Endothelial cell of umbilical vein (primary cell): ENCODE measurements at regions of chr5 and their contacts with region 1.

Region 1: DNA sequence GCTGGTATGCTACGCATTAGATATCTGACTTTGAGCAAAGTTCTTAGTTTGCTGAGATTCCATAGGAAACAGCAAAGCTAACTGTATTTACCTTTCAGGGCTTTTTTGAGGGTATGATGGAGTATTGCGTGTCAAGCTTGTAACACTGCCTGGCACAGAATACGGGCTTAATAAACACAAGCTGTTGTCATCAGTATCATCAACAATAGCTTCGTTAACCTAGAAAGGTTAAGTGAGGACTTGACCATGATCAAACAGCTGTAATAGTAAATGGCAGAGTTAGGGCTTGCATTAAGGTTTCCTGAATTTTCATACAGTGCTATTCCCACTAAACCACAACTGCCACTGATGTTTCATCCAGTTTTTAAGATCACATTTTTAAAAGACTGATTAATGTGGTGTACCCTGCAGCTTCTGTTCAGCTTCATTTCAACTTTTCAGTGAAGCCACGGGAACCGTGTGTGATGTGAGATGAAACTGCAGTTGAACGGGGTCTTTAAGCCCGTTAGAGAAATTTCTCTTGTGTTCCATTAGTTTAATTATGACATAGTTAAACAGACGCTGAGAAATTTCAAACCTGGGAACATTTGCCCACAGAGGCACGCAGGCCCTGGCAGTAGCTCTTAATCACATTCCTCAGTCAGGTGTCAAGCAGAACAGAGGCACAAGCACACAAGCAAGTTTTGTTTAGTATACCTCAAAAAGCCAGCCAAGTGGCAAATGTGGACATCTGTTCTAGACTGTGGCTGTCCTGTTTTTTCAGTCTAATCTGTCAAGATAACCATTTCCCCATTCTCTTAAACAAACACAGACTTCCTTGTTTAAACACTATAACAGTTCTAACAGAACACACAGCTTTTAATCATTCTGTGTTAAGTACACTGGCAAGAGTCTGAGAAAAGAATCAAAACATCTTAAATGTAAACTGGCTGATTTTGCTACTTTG is 147.1 kb downstream of the ZNF608 start:
- DNase-seq: peak; percentile 98
- H3K4me3 ChIP-seq: peak overlapping the region in 1 of 3 experiments; percentile 41
- H3K27ac ChIP-seq: peak overlapping the region; percentile 99
- H3K4me1 ChIP-seq: peaks cover 63% of the 10 kb centered on the region
- H3K27me3 ChIP-seq: no peaks in the 10 kb centered on the region
- CTCF ChIP-seq: no peak
- POLR2A ChIP-seq: peak; percentile 78

Region 2: GRCh38 chr5:123671042-123671441 is 928.3 kb before region 1 on chr5:
- CTCF ChIA-PET with region 1: interaction called, 3 read pairs
- POLR2A ChIA-PET with region 1: interaction called, 4 read pairs
- dilution Hi-C with region 1: no loop called
- intact Hi-C with region 1: loop called (anchors 2 kb)
- DNase-seq: peak; percentile 68
- H3K4me3 ChIP-seq: no peak overlapping the region
- H3K27ac ChIP-seq: no peak overlapping the region
- H3K4me1 ChIP-seq: no peaks in the 10 kb centered on the region
- H3K27me3 ChIP-seq: no peaks in the 10 kb centered on the region
- CTCF ChIP-seq: peak; percentile 52 to 57
- POLR2A ChIP-seq: no peak

Region 3: DNA sequence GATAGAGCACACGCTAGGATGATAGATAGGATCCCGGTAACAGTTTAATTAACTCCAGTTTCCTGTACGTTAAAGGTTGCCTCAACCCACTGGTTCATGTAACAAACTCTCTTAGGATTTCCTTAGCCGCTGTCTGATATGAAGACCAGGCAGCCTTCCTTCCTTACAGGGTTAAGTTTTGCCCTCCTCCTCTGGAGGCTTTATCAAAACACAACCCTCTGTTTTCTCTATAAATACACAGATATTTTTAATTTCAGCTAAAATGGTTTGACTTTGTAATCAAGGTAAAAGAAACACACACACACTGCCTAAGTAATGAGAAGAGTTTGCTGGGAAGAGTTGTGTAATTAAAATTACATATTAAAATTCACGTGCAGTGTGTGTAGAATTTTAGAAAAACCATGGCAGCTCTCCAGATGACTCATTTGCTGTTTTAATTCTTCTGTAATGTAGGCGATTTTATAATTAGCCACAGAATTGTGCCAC is 717.5 kb before region 1 on chr5:
- CTCF ChIA-PET with region 1: no interaction called
- POLR2A ChIA-PET with region 1: no interaction called
- dilution Hi-C with region 1: no loop called
- intact Hi-C with region 1: loop called (anchors 5 kb)
- DNase-seq: peak; percentile 90
- H3K4me3 ChIP-seq: peak overlapping the region in 1 of 3 experiments; percentile 58
- H3K27ac ChIP-seq: peak overlapping the region; percentile 48
- H3K4me1 ChIP-seq: peaks cover 27% of the 10 kb centered on the region
- H3K27me3 ChIP-seq: peaks cover 3 to 7% of the 10 kb centered on the region in 2 experiments
- CTCF ChIP-seq: no peak
- POLR2A ChIP-seq: no peak

Region 4: GRCh38 chr5:124438903-124439281 is 160.4 kb before region 1 on chr5:
- CTCF ChIA-PET with region 1: no interaction called
- POLR2A ChIA-PET with region 1: no interaction called
- dilution Hi-C with region 1: no loop called
- intact Hi-C with region 1: loop called (anchors 2 kb)
- DNase-seq: peak; percentile 80
- H3K4me3 ChIP-seq: peak overlapping the region in 1 of 3 experiments; percentile 2
- H3K27ac ChIP-seq: no peak overlapping the region
- H3K4me1 ChIP-seq: peaks cover 7% of the 10 kb centered on the region
- H3K27me3 ChIP-seq: no peaks in the 10 kb centered on the region
- CTCF ChIP-seq: no peak
- POLR2A ChIP-seq: no peak

Region 5: DNA sequence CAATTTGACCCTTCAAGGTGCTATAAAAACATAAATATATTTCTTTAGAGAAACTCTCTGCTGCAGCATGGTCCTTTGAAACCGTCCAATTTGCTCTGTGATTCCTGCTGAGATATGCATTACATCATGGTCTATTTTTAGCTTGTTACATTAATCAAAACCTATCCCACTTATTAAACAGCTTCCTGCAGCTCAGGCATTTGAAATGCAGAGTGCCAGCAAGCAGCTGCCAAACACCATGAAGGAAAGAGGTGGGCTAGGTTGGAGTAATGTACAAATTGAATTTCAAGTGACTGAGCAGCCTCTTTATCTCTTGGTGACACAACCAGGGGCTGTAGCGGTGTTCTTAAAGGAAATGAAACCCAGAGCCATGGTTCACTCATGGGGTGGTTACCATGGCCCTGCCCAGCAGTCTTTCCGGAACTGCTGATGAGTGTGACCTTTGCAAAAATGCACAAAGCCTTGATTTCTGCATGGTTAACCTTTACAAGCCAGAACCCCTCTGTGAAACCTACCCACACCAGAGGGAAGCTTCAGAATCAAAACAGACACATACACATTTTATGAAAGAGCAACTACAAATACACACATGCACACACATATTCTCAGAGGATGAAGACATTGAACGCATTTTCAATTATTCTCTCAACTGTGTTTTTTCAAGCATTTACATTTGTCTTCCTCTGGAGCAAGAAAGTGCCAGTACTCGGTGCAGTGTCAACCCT is 303.0 kb after region 1 on chr5:
- CTCF ChIA-PET with region 1: no interaction called
- POLR2A ChIA-PET with region 1: no interaction called
- dilution Hi-C with region 1: no loop called
- intact Hi-C with region 1: loop called (anchors 10 kb)
- DNase-seq: peak; percentile 30
- H3K4me3 ChIP-seq: no peak overlapping the region
- H3K27ac ChIP-seq: no peak overlapping the region
- H3K4me1 ChIP-seq: peaks cover 16% of the 10 kb centered on the region
- H3K27me3 ChIP-seq: no peaks in the 10 kb centered on the region
- CTCF ChIP-seq: no peak
- POLR2A ChIP-seq: no peak

Region 6: DNA sequence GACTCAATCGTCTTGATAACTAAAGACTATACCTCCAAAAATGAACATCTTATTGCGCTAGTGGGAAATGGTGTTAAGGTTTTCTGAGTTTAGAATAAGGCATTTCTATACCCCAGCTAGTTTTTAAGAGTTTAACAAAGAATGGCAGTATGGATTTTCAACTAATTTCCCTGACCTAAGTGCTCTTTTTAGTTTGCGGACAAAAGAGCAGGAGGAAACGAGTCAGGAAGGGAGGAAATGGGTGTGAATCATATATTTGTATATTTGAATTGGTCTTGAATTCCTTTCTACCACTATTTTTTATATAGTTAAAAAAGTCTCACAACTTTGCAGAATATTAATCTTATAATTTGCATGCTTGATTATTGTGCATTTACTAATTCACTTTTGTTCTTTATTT is 663.5 kb after region 1 on chr5:
- CTCF ChIA-PET with region 1: no interaction called
- POLR2A ChIA-PET with region 1: no interaction called
- dilution Hi-C with region 1: no loop called
- intact Hi-C with region 1: loop called (anchors 5 kb)
- DNase-seq: peak; percentile 83
- H3K4me3 ChIP-seq: no peak overlapping the region
- H3K27ac ChIP-seq: peak overlapping the region; percentile 81
- H3K4me1 ChIP-seq: peaks cover 22% of the 10 kb centered on the region
- H3K27me3 ChIP-seq: no peaks in the 10 kb centered on the region
- CTCF ChIP-seq: no peak
- POLR2A ChIP-seq: no peak

Region 7: DNA sequence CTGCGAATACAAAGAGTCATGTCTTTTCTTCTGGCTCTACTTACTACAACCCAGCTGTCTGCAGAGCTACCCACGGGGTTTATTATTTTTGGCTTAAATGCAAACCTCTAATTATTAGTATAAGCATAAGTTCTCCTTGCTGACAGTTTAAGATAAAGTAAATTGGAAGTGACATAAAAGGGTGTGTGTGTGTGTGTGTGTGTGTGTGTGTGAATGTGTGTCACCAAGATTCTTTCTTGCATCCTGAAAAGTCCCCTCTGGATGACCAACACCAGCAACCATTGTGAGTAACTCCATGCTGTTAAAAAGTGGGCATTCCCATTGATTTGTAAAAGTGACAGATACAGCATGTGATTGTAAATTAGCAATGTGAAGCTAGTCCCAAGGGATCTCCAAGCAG is 951.0 kb after region 1 on chr5:
- CTCF ChIA-PET with region 1: no interaction called
- POLR2A ChIA-PET with region 1: no interaction called
- dilution Hi-C with region 1: no loop called
- intact Hi-C with region 1: loop called (anchors 5 kb)
- DNase-seq: peak; percentile 97
- H3K4me3 ChIP-seq: no peak overlapping the region
- H3K27ac ChIP-seq: peak overlapping the region; percentile 69
- H3K4me1 ChIP-seq: peaks cover 30% of the 10 kb centered on the region
- H3K27me3 ChIP-seq: no peaks in the 10 kb centered on the region
- CTCF ChIP-seq: no peak
- POLR2A ChIP-seq: peak; percentile 66